Mammary epithelial cell (primary cell): ENCODE measurements at regions of chr17 and their contacts with region 1.

Region 1: DNA sequence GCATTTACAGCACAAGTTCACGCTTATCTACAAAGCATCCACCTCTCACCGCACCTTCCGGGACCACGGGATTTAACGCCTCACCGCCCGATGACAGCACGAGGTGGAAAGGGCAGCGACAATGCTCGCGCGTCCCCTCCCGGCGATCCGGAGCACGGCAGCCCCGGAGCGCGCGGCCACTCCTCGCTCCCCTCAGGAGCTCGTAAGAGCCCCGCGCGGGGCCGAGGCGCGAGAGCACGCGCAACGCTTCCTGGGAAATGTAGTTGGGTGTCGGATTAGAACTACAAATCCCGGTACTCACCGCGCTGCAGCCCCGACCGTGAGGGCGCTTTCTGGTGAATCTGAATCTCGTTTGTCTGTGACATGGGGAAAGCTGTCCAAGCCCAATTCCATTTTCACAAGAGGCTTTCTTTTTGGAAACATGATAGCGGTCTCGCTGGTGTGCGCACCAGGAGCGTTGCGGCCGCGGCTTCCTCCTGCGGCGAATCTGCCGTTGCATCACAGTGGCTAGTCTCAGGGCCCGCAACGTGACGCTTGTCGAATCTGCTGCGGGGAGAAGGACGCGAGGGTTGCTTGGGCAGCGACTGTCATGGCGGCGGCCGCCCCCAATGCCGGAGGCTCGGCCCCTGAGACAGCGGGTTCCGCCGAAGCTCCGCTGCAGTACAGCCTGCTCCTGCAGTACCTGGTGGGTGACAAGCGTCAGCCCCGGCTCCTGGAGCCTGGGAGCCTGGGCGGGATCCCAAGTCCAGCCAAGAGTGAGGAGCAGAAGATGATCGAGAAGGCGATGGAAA is at the start of gene TIMM22:
- DNase-seq: peak; percentile 98
- H3K4me3 ChIP-seq: peak within 1 kb of the TSS; percentile 85 to 100 (median 87)
- H3K27ac ChIP-seq: peak within 1 kb of the TSS; percentile 94
- H3K4me1 ChIP-seq: peaks cover 25% of the 10 kb centered on the region
- H3K27me3 ChIP-seq: no peaks in the 10 kb centered on the region
- CTCF ChIP-seq: peak; percentile 93
- total RNA-seq, gene TIMM22: 14.3 to 17.2 TPM

Region 2: GRCh38 chr17:143782-144281 is 852.9 kb before region 1 on chr17:
- CTCF ChIA-PET with region 1: no interaction called
- dilution Hi-C with region 1: no loop called
- in situ Hi-C with region 1: no loop called
- intact Hi-C with region 1: loop called (anchors 2 kb)
- DNase-seq: peak; percentile 61
- H3K4me3 ChIP-seq: no peak overlapping the region
- H3K27ac ChIP-seq: no peak overlapping the region
- H3K4me1 ChIP-seq: no peaks in the 10 kb centered on the region
- H3K27me3 ChIP-seq: no peaks in the 10 kb centered on the region
- CTCF ChIP-seq: peak; percentile 26 to 66

Region 3: DNA sequence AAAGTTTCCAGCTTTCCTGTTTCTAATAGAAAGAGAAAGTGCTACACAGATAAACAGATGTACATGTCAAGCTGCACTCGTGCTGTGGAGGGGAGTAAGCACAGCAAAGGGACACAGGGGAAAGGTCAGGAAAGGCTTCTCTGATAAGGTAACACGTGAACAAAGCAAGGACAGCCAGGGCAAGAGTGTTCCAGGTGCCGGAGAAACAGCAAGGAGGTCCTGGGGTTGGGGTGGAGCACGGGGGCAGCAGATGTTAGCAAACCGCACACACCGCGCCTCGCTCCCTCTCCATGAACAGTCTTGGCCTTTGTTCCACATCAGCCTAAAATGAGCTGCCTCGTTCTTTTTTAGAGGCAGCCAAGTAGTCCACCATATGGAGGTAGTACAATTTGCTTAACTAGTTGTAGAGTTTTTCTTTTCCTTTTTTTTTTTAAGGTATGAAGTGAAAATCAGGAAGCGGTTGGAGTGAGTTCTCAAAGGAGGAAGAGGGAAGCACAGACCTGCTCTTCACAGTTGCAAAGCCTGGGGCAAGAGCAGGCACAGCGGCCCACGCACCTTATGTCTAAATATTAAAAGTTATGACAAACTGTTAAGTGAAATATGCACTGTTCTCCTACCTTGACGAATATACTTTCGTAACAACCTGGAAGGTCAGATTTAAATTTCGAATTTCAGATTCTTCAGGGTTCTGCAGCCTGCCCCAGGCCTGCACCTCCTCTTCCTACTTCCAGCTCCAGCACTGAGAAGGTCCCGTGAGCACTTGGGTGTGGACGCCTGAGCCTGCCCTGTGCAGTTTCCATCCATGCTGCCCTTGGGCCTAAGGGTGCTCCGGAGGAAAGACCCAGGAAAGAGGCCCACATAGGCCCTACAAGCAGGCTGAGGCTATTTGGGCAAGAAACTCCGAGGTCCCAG is 602.7 kb before region 1 on chr17:
- CTCF ChIA-PET with region 1: no interaction called
- dilution Hi-C with region 1: no loop called
- in situ Hi-C with region 1: no loop called
- intact Hi-C with region 1: loop called (anchors 5 kb)
- DNase-seq: no peak
- H3K4me3 ChIP-seq: no peak overlapping the region
- H3K27ac ChIP-seq: no peak overlapping the region
- H3K4me1 ChIP-seq: peaks cover 12% of the 10 kb centered on the region
- H3K27me3 ChIP-seq: no peaks in the 10 kb centered on the region
- CTCF ChIP-seq: no peak

Region 4: DNA sequence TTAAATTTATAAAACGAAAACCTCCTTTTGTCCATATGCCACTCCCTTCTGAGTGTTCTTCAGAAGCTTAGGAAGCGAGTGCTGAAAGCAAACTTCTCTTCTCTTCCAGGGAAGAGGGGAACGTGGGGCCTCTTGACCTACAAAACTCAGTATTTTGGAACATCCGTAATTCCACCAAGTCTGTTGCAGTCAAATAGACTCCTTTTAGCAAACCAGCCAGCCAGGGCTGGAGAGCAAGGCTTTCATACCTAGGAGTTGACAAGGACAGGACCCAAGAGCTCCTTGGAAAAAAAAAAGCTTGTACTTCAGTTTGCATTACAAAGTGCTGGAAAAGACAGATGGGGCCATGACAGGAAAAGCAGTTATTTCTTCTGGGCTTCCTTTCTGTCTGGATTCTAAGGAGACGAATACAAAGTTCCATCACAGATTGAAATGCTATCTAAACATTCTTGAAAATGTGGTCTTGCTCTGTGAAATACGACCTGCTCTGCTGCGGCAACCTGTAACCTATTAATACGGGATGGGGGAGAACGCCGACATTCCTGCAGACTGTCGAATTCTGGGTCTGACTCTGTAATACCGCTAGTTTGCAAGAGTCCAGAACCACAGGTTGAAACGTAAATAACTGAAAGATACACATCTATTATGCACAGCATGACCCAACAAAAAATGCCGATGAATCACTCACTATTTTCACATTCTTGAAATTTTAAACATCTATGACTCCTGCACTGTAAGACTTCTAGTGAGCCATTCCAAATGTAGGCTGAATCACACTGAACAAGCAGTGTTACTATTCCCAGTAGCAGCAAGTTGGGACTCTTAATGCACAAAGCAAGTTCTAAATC is 302.7 kb before region 1 on chr17:
- CTCF ChIA-PET with region 1: no interaction called
- dilution Hi-C with region 1: no loop called
- in situ Hi-C with region 1: no loop called
- intact Hi-C with region 1: loop called (anchors 5 kb)
- DNase-seq: peak; percentile 95
- H3K4me3 ChIP-seq: no peak overlapping the region
- H3K27ac ChIP-seq: peak overlapping the region; percentile 69
- H3K4me1 ChIP-seq: peaks cover 47% of the 10 kb centered on the region
- H3K27me3 ChIP-seq: no peaks in the 10 kb centered on the region
- CTCF ChIP-seq: no peak

Region 5: DNA sequence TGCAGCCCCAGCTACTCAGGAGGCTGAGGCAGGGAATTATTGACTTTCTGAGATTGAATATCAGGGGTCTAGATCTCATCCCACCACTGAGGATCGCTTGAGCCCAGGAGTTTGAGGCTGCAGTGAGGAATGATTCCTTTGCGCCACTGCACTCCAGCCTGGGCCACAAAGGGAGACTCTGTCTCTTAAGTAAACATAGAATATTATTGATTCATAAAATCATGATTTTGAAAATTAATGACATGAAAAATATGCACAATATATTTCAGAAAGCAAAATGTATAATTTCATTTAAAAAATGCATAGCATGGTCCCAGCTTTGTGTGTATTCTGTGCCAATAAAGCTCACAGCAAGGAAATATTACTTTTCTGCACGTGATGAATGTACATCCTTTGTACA is 280.5 kb before region 1 on chr17:
- CTCF ChIA-PET with region 1: no interaction called
- dilution Hi-C with region 1: no loop called
- in situ Hi-C with region 1: no loop called
- intact Hi-C with region 1: loop called (anchors 5 kb)
- DNase-seq: no peak
- H3K4me3 ChIP-seq: no peak overlapping the region
- H3K27ac ChIP-seq: no peak overlapping the region
- H3K4me1 ChIP-seq: peaks cover 7% of the 10 kb centered on the region
- H3K27me3 ChIP-seq: no peaks in the 10 kb centered on the region
- CTCF ChIP-seq: no peak

Region 6: GRCh38 chr17:781805-782731 is 214.7 kb before region 1 on chr17 and contains the starts of genes GLOD4 and MRM3:
- CTCF ChIA-PET with region 1: no interaction called
- dilution Hi-C with region 1: no loop called
- in situ Hi-C with region 1: no loop called
- intact Hi-C with region 1: loop called (anchors 5 kb)
- DNase-seq: peak; percentile 82
- H3K4me3 ChIP-seq: peak within 1 kb of the TSS; percentile 73 to 97 (median 86)
- H3K27ac ChIP-seq: peak within 1 kb of the TSS; percentile 87
- H3K4me1 ChIP-seq: peaks cover 15% of the 10 kb centered on the region
- H3K27me3 ChIP-seq: no peaks in the 10 kb centered on the region
- CTCF ChIP-seq: peak in 1 of 2 donors; percentile 28
- total RNA-seq, gene GLOD4: 33.3 to 62.7 TPM
- total RNA-seq, gene MRM3: 14.6 to 15.3 TPM

Region 7: DNA sequence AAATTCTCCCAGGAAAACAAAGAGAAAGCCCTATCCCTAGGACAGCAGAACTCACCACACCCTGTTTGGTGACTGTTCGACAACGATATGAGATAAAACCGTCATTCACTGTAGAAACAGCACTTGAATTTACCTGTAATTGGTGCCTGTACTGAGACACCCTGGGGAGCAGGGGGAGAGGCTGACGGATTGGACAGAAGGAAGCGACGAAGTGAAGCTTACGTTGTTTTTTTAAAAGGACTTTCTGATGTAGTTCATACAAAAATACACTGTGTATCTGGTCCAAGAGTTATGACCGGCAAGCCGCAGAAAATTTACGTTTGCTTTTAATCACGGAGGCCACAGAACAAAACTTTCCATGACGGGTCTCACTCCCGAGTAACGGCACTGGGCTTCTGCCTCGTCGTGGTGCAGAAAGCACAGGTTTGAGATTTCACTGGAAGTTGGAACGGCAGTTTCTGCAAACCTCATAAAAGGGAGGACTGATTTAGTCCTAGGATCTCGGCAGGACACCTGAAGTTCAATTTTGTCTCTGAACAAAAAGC is 26.9 kb before region 1 on chr17:
- CTCF ChIA-PET with region 1: no interaction called
- dilution Hi-C with region 1: no loop called
- in situ Hi-C with region 1: no loop called
- intact Hi-C with region 1: no loop called
- DNase-seq: no peak
- H3K4me3 ChIP-seq: no peak overlapping the region
- H3K27ac ChIP-seq: no peak overlapping the region
- H3K4me1 ChIP-seq: peaks cover 22% of the 10 kb centered on the region
- H3K27me3 ChIP-seq: no peaks in the 10 kb centered on the region
- CTCF ChIP-seq: no peak

Region 8: GRCh38 chr17:1137465-1137894 is 140.7 kb after region 1 on chr17:
- CTCF ChIA-PET with region 1: no interaction called
- dilution Hi-C with region 1: no loop called
- in situ Hi-C with region 1: no loop called
- intact Hi-C with region 1: no loop called
- DNase-seq: no peak
- H3K4me3 ChIP-seq: no peak overlapping the region
- H3K27ac ChIP-seq: no peak overlapping the region
- H3K4me1 ChIP-seq: no peaks in the 10 kb centered on the region
- H3K27me3 ChIP-seq: no peaks in the 10 kb centered on the region
- CTCF ChIP-seq: no peak